ENCODE measurements at regions of chrX and their contacts with region 1.

Region 1: DNA sequence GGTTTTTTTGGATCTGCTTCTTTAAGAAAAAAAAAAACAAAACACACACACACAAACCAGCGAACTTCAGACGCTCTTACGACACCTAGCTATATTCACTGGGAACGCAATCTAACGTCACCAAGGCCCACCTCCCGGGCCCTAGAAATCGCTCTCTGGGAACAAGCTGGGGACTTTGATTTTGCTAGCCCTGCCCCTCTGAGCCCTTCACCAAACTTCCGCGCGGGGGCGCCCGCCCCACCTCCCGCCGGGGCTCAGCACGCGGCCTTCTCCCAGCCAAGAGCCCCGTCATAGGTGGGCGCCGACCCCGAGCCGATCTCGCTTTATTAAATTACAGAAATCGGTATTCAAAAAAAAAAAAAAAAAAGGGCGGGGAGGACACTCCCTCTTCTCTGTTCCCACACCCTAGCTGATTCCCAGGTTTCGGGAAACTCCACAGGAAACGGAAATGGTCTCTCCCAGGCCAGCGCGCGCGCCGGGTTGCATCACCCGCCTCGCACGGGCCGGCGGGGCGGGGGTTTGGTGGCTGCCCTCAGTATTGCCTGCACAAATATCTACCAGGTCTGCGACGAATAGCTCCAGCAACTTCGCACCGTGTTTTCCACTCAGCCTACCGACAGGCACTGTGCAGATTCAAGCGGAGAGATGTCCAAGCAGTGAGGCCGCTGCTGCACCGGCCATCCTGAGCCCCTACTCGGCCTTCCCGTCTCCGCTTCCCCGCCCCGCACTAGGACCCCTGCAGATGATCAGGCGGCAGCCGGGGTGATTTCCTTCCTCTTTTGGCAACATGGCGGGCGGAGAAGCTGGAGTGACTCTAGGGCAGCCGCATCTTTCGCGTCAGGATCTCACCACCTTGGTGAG is at the start of gene EIF2S3:
- DNase-seq: peak; percentile 84
- H3K4me3 Mint-ChIP-seq: no peak within 1 kb of the TSS
- H3K27ac Mint-ChIP-seq: peak within 1 kb of the TSS; percentile 99
- H3K4me1 Mint-ChIP-seq: peaks cover 5% of the 10 kb centered on the region
- H3K27me3 Mint-ChIP-seq: no peaks in the 10 kb centered on the region
- total RNA-seq, gene EIF2S3: 188 and 189 TPM in 2 replicates

Region 2: DNA sequence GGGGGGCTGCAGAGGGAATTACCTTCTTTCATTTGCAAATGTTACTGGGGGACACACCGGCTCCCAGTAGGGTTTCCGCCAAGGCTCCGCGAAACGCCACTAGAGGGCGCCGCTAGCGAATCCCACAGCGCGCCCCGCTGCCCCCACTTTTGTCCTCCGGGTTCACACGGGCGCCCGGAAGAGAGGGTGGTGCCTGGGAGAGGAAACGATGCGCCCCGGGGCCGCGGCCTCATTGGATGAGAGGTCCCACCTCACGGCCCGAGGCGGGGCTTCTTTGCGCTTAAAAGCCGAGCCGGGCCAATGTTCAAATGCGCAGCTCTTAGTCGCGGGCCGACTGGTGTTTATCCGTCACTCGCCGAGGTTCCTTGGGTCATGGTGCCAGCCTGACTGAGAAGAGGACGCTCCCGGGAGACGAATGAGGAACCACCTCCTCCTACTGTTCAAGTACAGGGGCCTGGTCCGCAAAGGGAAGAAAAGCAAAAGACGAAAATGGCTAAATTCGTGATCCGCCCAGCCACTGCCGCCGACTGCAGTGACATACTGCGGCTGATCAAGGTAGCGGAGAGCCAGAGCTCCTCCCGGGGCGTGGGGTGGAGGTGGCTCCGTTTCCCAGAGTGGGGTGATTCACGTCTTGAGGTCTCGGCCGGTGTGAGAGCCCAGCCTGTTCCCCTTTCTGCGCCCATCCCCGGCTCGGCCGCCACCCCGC is 271.4 kb before region 1 on chrX and contains the start of gene SAT1:
- intact Hi-C with region 1: loop called (anchors 2 kb)
- DNase-seq: peak; percentile 90
- H3K4me3 Mint-ChIP-seq: peak within 1 kb of the TSS; percentile 90
- H3K27ac Mint-ChIP-seq: peak within 1 kb of the TSS; percentile 96
- H3K4me1 Mint-ChIP-seq: peaks cover 31% of the 10 kb centered on the region
- H3K27me3 Mint-ChIP-seq: no peaks in the 10 kb centered on the region
- total RNA-seq, gene SAT1: 76.7 and 78.8 TPM in 2 replicates

Region 3: DNA sequence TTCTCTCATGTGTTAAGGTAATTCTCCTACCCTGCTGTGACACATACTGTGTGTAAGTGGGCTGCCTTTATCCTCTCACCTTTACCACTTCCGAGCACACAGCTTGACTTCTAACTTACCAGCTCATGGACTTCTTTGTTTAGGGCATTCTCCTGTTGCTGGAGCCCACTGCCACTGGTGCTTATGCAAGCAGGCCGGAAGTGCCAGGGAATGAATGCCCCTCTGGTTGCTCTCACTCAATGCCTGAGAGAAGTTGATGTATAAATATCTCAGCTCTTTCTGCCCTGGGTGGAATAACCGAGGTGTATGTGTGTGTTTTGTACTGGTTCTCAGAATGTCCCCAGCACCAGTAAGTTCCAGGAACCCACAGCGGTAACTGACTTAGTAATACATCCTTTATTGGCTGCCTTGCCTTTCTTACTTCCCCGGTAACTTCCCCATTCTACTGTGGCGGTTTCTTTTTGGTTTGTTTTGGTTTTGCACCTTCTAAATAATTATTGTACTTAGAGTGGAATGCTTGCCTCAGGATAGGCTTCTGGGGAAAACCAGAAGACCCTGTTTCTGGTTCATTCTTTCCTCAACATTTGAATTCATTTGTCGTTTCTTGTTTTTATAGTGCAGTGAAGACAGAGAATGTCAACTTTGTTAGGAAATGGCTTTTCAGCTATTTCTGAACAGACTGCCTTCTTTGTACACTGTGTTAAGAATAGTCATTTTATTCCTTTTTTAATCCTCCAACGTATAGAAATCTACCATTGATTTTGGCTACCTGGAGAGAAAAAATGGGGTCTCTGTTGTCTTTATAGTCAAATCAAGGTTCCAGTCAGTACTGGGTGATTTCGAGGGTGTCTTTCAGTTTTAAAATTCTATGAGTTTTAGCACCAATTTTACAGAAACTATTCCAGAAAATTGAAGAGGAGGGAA is 101.2 kb before region 1 on chrX:
- intact Hi-C with region 1: loop called (anchors 1 kb)
- DNase-seq: peak; percentile 34
- H3K4me3 Mint-ChIP-seq: peak overlapping the region; percentile 83
- H3K27ac Mint-ChIP-seq: peak overlapping the region; percentile 95
- H3K4me1 Mint-ChIP-seq: peaks cover 27% of the 10 kb centered on the region
- H3K27me3 Mint-ChIP-seq: no peaks in the 10 kb centered on the region

Region 4: DNA sequence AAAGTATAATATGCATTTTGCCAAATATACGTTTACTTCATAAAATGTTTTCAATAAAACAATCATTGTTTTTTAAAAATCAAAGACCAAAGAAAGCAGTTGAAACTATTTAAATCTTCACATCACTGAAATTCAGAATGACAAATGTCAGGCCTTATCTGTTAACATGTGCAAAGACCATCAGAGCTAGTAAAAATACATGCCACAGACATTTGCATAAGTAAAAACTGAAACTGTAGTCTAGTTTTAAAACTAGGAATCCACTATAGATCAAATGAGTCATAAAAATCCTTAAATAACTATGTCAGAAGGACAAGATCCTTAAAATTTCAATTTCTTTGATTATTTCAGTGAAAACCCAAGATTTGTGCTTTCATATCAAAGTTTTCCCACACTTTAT is 52.2 kb before region 1 on chrX:
- intact Hi-C with region 1: no loop called
- DNase-seq: no peak
- H3K4me3 Mint-ChIP-seq: no peak overlapping the region
- H3K27ac Mint-ChIP-seq: no peak overlapping the region
- H3K4me1 Mint-ChIP-seq: peaks cover 21% of the 10 kb centered on the region
- H3K27me3 Mint-ChIP-seq: no peaks in the 10 kb centered on the region

Region 5: GRCh38 chrX:24024819-24025740 is 29.3 kb before region 1 on chrX:
- intact Hi-C with region 1: loop called (anchors 1 kb)
- DNase-seq: peak; percentile 76
- H3K4me3 Mint-ChIP-seq: peak overlapping the region; percentile 91
- H3K27ac Mint-ChIP-seq: peak overlapping the region; percentile 55
- H3K4me1 Mint-ChIP-seq: peaks cover 22% of the 10 kb centered on the region
- H3K27me3 Mint-ChIP-seq: peaks cover 3% of the 10 kb centered on the region

Region 6: GRCh38 chrX:24150051-24150790 is 95.8 kb after region 1 on chrX:
- intact Hi-C with region 1: loop called (anchors 1 kb)
- DNase-seq: peak; percentile 76
- H3K4me3 Mint-ChIP-seq: peak overlapping the region; percentile 93
- H3K27ac Mint-ChIP-seq: peak overlapping the region; percentile 87
- H3K4me1 Mint-ChIP-seq: peaks cover 45% of the 10 kb centered on the region
- H3K27me3 Mint-ChIP-seq: no peaks in the 10 kb centered on the region

Region 7: DNA sequence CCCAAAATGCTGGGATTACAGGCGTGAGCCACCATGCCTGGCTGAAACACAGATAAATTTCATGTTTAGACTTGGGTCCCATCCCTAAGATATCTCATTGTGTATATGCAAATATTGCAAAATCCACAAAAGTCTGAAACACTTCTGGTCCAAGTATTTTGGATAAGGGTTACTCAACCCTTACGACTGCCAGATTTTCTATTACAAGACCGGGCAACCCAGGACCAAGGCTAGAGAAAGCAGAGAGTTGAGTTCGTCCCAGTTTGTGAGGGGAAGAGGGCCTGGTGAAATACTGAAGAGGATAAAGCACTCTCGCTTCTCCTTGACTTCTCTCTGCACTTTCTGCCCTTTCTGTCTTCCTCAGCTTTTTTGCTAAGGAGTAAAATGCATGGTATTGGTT is 129.6 kb after region 1 on chrX:
- intact Hi-C with region 1: no loop called
- DNase-seq: no peak
- H3K4me3 Mint-ChIP-seq: no peak overlapping the region
- H3K27ac Mint-ChIP-seq: no peak overlapping the region
- H3K4me1 Mint-ChIP-seq: peaks cover 6% of the 10 kb centered on the region
- H3K27me3 Mint-ChIP-seq: no peaks in the 10 kb centered on the region

Measured in activated T-helper 2 cell treated with anti-CD3 and anti-CD28 coated beads, Interferon-gamma antibody, Interleukin-2, Interleukin-4, amounts not matched to agents 10 μg/mL and 5 μg/mL and 100 μg/mL, durations not matched to agents 14 hours and 24 hours and 36 hours (primary cell).